ENCODE measurements at regions of chr21 and their contacts with region 1.

Region 1: DNA sequence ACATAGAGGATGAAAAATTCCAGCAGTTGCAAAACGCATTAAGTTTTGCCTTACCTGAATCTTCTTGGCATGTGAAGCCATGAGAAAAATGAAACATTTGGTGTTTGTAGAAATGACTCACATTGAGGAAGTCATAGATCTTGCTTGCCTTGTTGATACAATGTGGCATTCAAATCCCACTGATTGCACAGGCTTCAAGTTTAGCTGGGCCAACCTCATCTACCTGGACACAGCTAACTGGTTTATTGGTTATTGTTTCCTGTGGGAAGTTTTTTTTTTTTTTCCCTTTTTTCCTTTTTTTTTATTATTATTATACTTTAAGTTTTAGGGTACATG is 168.9 kb upstream of the C21orf91 start:
- DNase-seq: no peak
- ATAC-seq: no peak
- H3K4me3 ChIP-seq: no peak overlapping the region
- H3K27ac ChIP-seq: no peak overlapping the region
- H3K4me1 ChIP-seq: no peaks in the 10 kb centered on the region
- H3K27me3 ChIP-seq: no peaks in the 10 kb centered on the region
- CTCF ChIP-seq: no peak
- POLR2A ChIP-seq: no peak
- RAD21 ChIP-seq: no peak

Region 2: GRCh38 chr21:17964716-17965115 is 23.4 kb before region 1 on chr21:
- CTCF ChIA-PET with region 1: no interaction called
- POLR2A ChIA-PET with region 1: no interaction called
- RAD21 ChIA-PET with region 1: no interaction called
- intact Hi-C with region 1: loop called (anchors 1 kb)
- DNase-seq: no peak
- ATAC-seq: no peak
- H3K4me3 ChIP-seq: no peak overlapping the region
- H3K27ac ChIP-seq: no peak overlapping the region
- H3K4me1 ChIP-seq: no peaks in the 10 kb centered on the region
- H3K27me3 ChIP-seq: no peaks in the 10 kb centered on the region
- CTCF ChIP-seq: no peak
- POLR2A ChIP-seq: no peak
- RAD21 ChIP-seq: no peak

Region 3: DNA sequence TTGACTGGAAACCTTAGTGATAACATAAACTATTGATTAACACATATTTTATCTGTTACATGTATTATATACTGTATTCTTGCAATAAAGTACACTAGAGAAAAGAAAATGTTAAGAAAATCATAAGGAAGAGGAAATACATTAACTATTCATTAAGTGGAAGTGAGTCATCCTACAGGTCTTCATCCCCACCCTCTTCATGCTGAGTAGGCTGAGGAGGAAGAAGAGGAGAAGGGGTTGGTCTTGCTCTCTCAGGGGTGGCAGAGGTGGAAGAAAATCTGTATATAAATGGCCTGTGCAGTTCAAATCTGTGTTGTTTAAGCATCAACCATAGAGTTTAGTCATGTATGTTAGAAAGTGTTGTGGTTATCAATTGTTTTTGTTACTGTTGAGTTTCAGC is 190.4 kb after region 1 on chr21:
- CTCF ChIA-PET with region 1: no interaction called
- POLR2A ChIA-PET with region 1: no interaction called
- RAD21 ChIA-PET with region 1: no interaction called
- intact Hi-C with region 1: no loop called
- DNase-seq: no peak
- ATAC-seq: no peak
- H3K4me3 ChIP-seq: no peak overlapping the region
- H3K27ac ChIP-seq: no peak overlapping the region
- H3K4me1 ChIP-seq: no peaks in the 10 kb centered on the region
- H3K27me3 ChIP-seq: no peaks in the 10 kb centered on the region
- CTCF ChIP-seq: no peak
- POLR2A ChIP-seq: no peak
- RAD21 ChIP-seq: no peak